OCI-LY7 (cell line): ENCODE measurements at regions of chr1 and their contacts with region 1.

Region 1: DNA sequence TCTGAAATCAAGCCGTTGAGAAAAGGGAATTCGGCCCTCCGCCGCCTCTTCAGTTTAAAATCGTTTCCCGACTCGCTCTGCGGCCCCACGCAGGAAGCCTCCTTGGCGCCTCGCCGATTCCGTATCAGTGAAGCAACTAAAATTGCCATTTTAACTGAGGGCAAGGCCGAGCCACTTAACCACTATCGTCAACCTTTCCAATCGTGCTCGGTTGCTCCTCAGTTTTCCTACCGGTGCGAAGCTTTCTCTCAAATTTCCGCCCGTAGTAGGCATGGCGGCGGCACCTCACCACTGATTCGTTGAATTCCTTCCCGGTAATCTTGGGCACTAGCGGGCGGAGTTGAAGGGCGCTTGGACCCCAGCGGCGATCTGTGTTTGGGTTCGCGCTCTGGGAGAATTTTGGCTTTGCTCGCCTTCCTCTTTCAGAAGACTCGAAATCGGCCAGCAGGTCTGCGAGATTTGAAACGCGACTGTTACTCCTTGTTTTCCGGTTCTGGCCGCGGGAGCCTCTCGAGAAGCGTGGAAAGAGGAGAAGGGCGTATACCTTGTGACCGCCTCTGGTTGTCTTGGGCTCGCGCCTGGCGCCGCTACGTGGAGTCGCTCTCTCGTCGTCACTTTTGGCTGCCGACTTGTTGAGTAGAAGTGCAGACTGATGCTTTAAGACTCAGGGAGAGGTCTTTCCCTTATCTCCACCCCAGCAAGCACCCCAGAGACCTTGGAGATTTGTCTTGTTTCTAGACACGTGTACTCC is at the starts of genes CENPL and DARS2:
- DNase-seq: peak; percentile 98
- H3K4me3 ChIP-seq: peak within 1 kb of the TSS; percentile 97
- H3K27ac ChIP-seq: peak within 1 kb of the TSS; percentile 93
- H3K4me1 ChIP-seq: peaks cover 56% of the 10 kb centered on the region
- CTCF ChIP-seq: no peak
- total RNA-seq, gene CENPL: 25.4 and 47.0 TPM in 2 replicates
- total RNA-seq, gene DARS2: 42.4 and 45.6 TPM in 2 replicates

Region 2: DNA sequence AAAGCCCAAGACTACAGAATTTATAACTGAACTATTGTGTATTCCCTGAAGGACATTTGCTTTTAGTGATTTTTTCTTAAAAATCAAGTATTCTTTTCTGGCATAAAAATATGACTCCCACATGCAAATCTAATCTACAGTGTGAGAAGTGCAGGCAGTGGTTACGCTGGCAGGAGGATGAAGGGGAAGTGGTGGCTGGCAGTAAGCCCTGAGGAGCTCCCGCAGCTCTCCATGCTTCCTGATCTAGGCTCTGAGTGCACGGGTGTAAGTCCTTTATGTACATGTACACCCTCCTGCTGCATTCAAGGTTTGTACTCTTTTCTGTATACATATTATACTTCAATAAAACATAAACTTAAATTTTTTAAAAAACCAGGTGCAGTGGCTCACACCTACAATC is 414.9 kb before region 1 on chr1:
- CTCF ChIA-PET with region 1: no interaction called
- POLR2A ChIA-PET with region 1: no interaction called
- intact Hi-C with region 1: loop called (anchors 2 kb)
- DNase-seq: peak; percentile 76
- H3K4me3 ChIP-seq: peak overlapping the region; percentile 41
- H3K27ac ChIP-seq: peak overlapping the region; percentile 96
- H3K4me1 ChIP-seq: peaks cover 100% of the 10 kb centered on the region
- CTCF ChIP-seq: no peak

Region 3: DNA sequence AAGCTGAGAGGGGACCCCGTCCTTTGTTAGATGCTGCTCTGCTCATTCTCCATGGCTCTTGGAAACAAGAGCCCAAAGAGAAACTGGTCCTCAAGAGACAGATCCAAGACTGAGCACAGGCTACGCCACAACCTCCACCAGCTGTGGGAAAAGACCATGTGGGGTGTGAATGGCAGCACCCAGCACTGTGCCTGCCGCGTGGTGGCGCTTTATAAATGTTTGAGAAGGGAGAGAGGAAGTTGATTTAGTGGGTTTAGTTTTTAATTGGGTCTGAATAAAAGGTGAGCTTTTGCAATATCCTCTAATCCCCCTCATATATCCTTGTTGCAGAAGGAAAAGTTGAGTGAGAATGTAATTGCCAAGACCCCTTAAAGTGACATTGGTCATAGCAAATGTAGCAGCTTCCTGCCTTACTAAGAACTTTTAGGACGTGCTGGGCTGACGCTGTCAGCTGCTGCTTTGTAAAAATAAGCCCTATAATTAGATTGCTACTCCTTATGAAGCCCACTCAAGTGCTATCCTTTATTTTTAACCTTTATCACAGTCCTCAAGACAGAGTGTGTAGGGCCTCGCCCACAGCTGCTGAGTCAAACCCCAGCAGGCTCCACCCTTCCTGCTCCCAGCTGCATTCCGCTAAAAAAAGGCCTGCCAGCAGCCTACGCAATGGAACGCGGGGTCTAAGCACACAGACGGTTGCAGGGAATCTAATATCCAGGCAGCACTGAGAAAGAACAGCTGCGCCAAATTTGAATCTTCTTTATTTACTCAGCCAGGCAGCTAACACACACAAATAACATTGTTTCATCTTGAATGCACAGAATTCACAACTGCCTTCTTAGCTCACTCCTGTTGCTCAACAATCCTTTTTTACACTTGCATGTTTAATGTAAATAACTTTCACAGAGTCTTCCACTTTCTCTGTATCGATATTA is 394.8 kb before region 1 on chr1:
- CTCF ChIA-PET with region 1: no interaction called
- POLR2A ChIA-PET with region 1: interaction called, 4 read pairs
- intact Hi-C with region 1: loop called (anchors 1 kb)
- DNase-seq: peak; percentile 75
- H3K4me3 ChIP-seq: peak overlapping the region; percentile 30
- H3K27ac ChIP-seq: peak overlapping the region; percentile 66
- H3K4me1 ChIP-seq: peaks cover 29% of the 10 kb centered on the region
- CTCF ChIP-seq: peak; percentile 96

Region 4: DNA sequence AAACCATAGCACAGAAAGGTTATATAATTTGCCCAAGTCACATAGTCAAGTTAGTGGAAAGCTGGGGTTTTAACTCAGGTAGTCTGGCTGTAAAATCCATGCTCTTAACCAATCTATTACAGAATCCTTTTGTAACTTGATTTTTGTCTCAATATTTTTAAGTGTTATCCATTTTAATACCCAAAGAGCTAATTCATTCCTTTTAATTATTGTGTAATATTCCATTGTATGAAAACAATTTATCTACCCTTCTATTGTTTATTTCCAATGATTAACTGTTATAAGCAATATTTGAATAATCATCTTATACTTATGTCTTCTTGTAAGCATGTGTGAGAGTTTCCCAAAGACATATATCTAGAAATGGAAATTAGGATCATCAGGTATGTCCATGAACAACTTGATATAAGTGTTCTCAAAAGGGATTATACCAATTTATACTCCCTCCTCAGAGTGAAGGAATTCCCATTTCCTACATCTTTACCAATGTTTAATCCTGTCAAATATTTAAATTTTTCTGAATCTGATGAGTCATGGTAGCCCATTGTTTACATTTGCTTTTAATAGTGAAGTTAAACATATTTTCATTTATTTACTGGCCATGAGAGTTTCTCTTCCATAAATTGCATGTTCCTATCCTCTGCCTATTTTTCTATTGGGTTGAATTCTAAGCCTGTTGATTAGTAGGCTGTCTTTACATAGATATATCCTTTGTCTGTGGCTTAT is 175.5 kb before region 1 on chr1:
- CTCF ChIA-PET with region 1: no interaction called
- POLR2A ChIA-PET with region 1: no interaction called
- intact Hi-C with region 1: no loop called
- DNase-seq: no peak
- H3K4me3 ChIP-seq: no peak overlapping the region
- H3K27ac ChIP-seq: no peak overlapping the region
- H3K4me1 ChIP-seq: no peaks in the 10 kb centered on the region
- CTCF ChIP-seq: no peak

Region 5: DNA sequence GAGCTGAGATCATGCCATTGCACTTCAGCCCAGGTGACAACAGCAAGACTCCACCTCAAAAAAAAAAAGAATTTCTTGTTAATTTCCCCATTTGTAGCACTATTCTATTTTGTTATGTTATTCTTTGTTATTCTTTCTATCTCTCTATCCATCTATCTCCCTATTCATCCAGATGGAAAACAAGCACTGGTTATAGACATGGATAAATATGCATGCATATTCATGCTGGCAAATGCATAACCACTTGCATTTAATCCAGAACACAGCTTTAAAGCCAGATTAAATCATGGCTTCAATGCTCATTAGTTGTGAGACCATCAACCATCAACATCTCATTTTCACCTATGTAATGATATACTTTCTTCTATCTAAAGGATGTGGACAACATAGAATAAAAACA is 131.3 kb before region 1 on chr1:
- CTCF ChIA-PET with region 1: no interaction called
- POLR2A ChIA-PET with region 1: no interaction called
- intact Hi-C with region 1: loop called (anchors 5 kb)
- DNase-seq: no peak
- H3K4me3 ChIP-seq: no peak overlapping the region
- H3K27ac ChIP-seq: no peak overlapping the region
- H3K4me1 ChIP-seq: no peaks in the 10 kb centered on the region
- CTCF ChIP-seq: no peak

Region 6: DNA sequence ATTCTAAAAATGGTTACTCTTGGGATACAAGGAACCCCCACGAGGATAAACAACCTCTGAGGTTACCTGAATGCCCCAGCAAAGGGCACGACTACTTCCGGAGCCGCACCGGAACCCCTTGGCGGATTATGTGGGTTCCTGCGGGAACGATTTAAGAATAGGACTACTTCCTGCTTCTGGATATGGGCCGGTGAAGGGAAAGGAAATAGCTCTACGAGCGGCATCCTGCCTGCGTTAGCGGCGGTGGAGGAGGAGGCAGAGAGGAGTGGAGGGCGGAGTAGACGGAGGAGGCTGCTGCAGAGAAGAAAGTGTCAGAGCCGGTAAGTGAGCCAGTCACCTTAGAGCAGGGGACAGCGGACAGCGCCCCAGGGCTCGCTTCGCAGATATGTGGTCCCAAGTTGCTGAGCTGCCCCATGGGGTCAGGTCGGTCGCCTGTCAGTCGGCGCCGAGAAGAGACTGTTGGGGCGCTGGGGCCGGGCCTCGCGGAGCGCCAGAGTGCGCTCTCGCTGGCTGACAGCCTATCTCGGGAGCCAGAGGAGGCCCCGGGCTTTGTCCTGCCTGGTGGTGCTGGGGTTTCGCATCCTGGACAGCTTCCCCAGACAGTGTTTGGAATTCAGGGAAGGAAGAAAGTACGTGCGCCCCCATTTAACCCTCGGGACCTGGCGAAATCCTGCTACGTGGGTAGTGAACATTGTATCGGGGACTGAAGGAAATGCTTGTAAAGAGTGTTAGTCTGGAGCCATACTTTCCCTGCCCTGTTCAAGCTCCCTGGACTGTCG is 109.6 kb before region 1 on chr1 and contains the start of gene KLHL20:
- CTCF ChIA-PET with region 1: no interaction called
- POLR2A ChIA-PET with region 1: interaction called, 3 read pairs
- intact Hi-C with region 1: loop called (anchors 2 kb)
- DNase-seq: peak; percentile 94
- H3K4me3 ChIP-seq: peak within 1 kb of the TSS; percentile 78
- H3K27ac ChIP-seq: peak within 1 kb of the TSS; percentile 77
- H3K4me1 ChIP-seq: peaks cover 23% of the 10 kb centered on the region
- CTCF ChIP-seq: 0 out of 2 replicates have a peak, but pooled peaks have one; percentile 38
- total RNA-seq, gene KLHL20: 17.5 and 28.2 TPM in 2 replicates

Region 7: DNA sequence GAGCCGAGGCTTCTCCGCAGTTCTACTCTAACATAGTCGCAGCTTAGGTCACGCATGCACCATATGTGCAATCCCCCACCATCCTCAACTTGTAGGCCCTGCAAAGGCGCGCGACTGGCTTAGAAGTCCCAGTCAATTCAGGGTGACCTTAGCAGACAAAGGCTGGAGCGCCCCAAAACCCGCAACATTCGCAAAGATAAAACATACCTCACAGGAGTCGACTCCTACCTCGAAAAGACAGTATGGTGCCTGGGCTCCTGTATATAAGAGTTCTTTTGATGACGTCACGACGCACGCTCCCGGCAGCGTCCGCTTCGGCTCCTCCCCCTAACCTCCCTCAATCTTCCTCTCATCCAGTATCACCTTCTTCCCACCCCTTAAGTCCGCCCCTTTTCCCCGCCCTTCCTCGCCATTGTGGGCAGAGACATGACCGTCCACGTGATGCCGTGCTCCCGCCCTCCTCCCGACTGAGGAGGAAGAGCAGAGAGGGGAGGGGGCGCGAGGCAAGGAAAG is 43.3 kb after region 1 on chr1 and contains the start of gene GAS5:
- CTCF ChIA-PET with region 1: no interaction called
- POLR2A ChIA-PET with region 1: interaction called, 11 read pairs
- intact Hi-C with region 1: loop called (anchors 1 kb)
- DNase-seq: peak; percentile 99
- H3K4me3 ChIP-seq: peak within 1 kb of the TSS; percentile 98
- H3K27ac ChIP-seq: peak within 1 kb of the TSS; percentile 91
- H3K4me1 ChIP-seq: peaks cover 61% of the 10 kb centered on the region
- CTCF ChIP-seq: no peak
- total RNA-seq, gene GAS5: 899 and 1,026 TPM in 2 replicates

Region 8: DNA sequence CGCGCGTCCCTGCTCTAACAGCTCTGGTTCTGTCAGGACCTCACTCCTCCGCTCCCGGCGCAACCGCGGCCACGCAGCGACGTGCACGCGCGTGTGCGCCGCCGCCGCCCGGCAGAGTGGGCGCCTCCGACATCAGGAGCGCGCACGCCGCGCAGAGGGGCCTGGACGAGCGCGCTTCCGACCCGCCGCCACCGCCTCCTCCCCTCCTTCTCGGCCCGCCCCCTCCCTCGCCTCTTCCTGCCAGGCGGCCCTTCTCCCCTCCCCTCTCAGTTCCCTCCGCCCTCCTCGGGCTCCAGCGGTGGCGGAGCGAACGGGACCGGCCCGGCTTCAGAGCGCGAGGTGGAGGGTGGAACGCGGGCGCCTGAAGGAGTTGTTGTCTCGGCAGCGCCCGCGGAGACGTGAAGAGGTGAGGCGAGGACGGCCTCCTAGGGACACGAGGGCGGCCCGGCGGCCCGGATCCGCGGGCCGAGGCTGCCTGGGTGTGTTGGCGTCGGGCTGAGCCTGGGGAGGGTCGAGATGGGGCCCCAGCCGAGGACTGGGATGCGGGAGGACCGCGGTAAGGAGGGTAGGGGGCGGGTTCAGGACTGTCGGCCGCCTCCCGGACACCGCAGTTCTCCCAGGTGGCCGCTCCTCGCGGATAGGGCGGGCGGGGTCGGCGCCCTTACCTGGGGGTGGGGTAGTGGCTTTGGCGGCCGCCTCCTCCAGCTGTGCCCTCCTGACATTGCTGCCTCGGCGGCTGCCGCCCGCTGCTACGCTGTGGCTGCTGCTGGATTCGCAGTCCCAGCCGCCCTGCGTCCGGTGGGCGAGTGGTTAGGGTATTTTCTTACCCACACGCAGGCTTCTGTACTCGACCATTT is 335.0 kb after region 1 on chr1 and contains the start of gene RABGAP1L:
- CTCF ChIA-PET with region 1: no interaction called
- POLR2A ChIA-PET with region 1: no interaction called
- intact Hi-C with region 1: loop called (anchors 10 kb)
- DNase-seq: peak; percentile 96
- H3K4me3 ChIP-seq: peak within 1 kb of the TSS; percentile 96
- H3K27ac ChIP-seq: peak within 1 kb of the TSS; percentile 82
- H3K4me1 ChIP-seq: peaks cover 46% of the 10 kb centered on the region
- CTCF ChIP-seq: 0 out of 2 replicates have a peak, but pooled peaks have one; percentile 9
- total RNA-seq, gene RABGAP1L: 98.1 and 142 TPM in 2 replicates